Heart left ventricle (tissue), 16 donors: ENCODE measurements at regions of chr1 and their contacts with region 1.

Region 1: DNA sequence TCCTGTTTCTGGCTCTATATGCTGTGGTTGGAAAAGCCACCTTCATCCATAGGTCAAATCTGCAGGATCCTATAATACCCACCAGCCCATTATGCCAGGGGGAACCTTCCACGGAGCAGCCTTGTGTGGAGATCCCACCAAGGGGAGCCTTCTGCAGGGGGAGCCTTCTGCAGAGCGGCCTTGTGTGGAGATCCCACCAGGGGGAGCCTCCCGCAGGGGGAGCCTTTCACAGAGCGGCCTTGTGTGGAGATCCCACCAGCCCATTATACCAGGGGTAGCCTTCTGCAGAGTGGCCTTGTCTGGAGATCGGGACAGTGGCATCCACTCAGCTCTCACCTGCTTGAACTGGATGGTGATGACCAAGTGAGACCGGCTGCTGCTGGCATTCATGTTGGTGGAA is 85.3 kb downstream of the SCCPDH start:
- DNase-seq: no peak
- ATAC-seq: peak in 2 of 4 donors; percentile 3 to 22
- H3K4me3 ChIP-seq: no peak overlapping the region
- H3K27ac ChIP-seq: peak overlapping the region in 1 of 12 donors; percentile 70
- H3K4me1 ChIP-seq: peaks cover 0 to 4% (median 0%) of the 10 kb centered on the region in 12 donors
- H3K27me3 ChIP-seq: no peaks in the 10 kb centered on the region
- CTCF ChIP-seq: no peak
- POLR2A ChIP-seq: no peak

Region 2: DNA sequence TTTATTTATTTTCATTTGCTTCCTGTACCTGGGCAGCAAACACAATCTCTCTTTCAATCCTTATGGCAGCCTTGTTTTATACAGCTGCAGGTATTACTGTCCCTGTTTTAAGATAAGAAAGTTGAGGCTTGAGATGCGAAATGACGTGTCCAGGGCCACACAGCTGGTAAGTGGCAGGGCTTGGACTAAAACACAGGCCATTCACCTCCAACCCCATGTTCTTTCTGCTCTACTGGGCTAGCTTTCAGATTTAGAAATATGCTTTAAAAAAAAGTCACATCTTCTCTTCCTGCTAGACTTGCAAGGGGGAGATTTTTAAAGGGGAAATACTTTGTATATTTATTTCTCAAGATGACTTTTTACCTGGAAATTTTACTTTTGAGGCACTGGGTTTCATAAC is 180.4 kb before region 1 on chr1:
- intact Hi-C with region 1: no loop called
- DNase-seq: no peak
- ATAC-seq: no peak
- H3K4me3 ChIP-seq: no peak overlapping the region
- H3K27ac ChIP-seq: no peak overlapping the region
- H3K4me1 ChIP-seq: peaks cover 0 to 6% (median 0%) of the 10 kb centered on the region in 12 donors
- H3K27me3 ChIP-seq: no peaks in the 10 kb centered on the region
- CTCF ChIP-seq: no peak
- POLR2A ChIP-seq: no peak

Region 3: DNA sequence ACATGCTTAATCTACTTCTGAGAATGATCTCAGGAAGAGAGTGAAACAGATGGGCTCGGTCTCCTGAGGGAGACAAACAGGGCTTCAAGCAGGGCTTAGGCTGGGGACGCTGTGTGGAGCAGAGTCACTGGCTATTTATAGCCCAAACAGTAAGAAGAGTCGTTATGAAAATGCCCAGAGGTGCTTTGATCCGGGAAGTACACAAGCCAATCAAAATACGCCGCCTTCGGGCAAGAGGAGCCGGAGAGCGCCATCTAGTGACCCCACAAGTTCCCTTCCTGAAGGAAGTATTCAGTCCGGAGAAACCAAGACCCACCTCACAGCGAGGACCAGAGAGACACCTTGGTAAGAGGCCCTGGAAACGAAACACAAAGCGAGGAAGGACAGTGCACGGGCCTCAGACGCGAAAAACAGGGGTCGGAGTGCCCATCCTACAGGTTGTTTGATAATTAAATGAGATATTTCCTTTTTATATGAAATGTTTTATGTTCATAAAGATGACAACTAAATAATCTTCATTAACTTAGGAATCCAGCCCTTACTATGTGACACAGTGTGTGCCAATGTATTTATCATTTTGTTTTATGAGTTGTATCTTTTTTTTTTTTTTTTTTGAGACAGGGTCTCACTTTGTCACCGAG is 110.3 kb before region 1 on chr1:
- intact Hi-C with region 1: no loop called
- DNase-seq: peak; percentile 87 to 91 (median 88)
- ATAC-seq: peak; percentile 91 to 97 (median 96)
- H3K4me3 ChIP-seq: peak overlapping the region in 8 of 12 donors; percentile 22 to 52 (median 38)
- H3K27ac ChIP-seq: peak overlapping the region in 11 of 12 donors; percentile 26 to 80 (median 68)
- H3K4me1 ChIP-seq: peaks cover 0 to 18% (median 9%) of the 10 kb centered on the region in 12 donors
- H3K27me3 ChIP-seq: no peaks in the 10 kb centered on the region
- CTCF ChIP-seq: peak; percentile 76 to 97 (median 89)
- POLR2A ChIP-seq: no peak

Region 4: DNA sequence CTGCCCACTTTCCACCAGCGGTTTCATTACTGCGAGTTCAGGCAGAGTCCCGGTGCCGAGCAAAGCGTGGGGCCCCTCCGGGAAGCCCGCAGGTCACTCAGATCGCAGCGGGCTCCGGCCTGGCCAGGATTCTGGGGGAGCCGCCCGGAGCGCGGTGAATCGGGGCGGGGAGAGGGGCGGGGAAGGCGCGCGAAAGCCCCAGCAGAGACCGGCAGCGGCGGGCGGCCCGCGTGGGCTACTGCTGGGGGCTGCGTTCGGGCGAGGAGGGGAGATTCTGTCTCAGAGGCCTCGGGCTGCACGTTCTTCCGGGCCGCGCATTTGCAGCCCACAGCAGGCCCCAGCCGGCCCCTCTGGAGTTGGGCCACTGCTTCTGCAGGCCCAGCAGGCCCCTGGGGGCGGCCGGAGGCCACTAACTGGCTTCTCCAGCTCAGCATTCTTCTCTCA is 20.6 kb before region 1 on chr1:
- intact Hi-C with region 1: loop called in 1 of 10 experiments (anchors 2 kb)
- DNase-seq: no peak
- ATAC-seq: no peak
- H3K4me3 ChIP-seq: peak overlapping the region in 9 of 12 donors; percentile 4 to 50 (median 41)
- H3K27ac ChIP-seq: no peak overlapping the region
- H3K4me1 ChIP-seq: peaks cover 0 to 16% (median 4%) of the 10 kb centered on the region in 12 donors
- H3K27me3 ChIP-seq: peaks cover 0 to 21% (median 0%) of the 10 kb centered on the region in 9 donors
- CTCF ChIP-seq: no peak
- POLR2A ChIP-seq: no peak